ENCODE measurements at regions of chr6 and their contacts with region 1.

Region 1: DNA sequence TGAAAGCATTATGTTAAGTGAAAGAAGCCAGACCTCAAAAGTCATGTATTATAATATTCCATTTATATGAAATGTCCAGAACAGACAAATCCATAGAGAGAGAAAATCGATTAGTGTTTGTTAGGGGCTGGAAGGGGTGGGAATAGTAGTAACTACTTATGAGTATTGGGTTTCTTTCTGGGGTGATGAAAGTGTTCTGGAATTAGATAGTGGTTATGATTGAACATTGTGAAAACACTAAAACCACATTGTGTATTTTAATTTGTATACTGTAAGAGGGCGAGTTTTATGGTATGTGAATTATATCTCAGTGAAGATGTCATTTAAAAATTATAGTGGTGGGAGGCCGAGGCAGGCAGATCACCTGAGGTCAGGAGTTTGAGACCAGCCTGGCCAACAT is 52.0 kb upstream of the KIF13A start:
- DNase-seq: no peak
- ATAC-seq: no peak
- H3K4me3 ChIP-seq: no peak overlapping the region
- H3K27ac ChIP-seq: no peak overlapping the region
- H3K4me1 ChIP-seq: peaks cover 20% of the 10 kb centered on the region
- H3K27me3 ChIP-seq: no peaks in the 10 kb centered on the region
- CTCF ChIP-seq: no peak

Region 2: GRCh38 chr6:17987576-17988421 is 51.7 kb before region 1 on chr6 and contains the start of gene KIF13A:
- CTCF ChIA-PET with region 1: interaction called, 3 read pairs
- POLR2A ChIA-PET with region 1: interaction called, 4 read pairs
- intact Hi-C with region 1: loop called (anchors 2 kb)
- DNase-seq: peak; percentile 71
- ATAC-seq: peak; percentile 66
- H3K4me3 ChIP-seq: peak within 1 kb of the TSS; percentile 86
- H3K27ac ChIP-seq: peak within 1 kb of the TSS; percentile 54
- H3K4me1 ChIP-seq: peaks cover 43% of the 10 kb centered on the region
- H3K27me3 ChIP-seq: no peaks in the 10 kb centered on the region
- CTCF ChIP-seq: peak; percentile 21
- total RNA-seq, gene KIF13A: 21.3 and 27.1 TPM in 2 replicates

Measured in PC-3 (cell line).